GM12878 (cell line): ENCODE measurements at regions of chr6 and their contacts with region 1.

Region 1: GRCh38 chr6:79078075-79079025 is at the start of gene PHIP:
- DNase-seq: peak; percentile 82
- ATAC-seq: peak; percentile 86
- H3K4me3 ChIP-seq: peak within 1 kb of the TSS; percentile 93
- H3K27ac ChIP-seq: peak within 1 kb of the TSS; percentile 97
- H3K4me1 ChIP-seq: 0 out of 2 replicates have a peak, but pooled peaks cover 3% of the 10 kb centered on the region
- H3K27me3 ChIP-seq: no peaks in the 10 kb centered on the region
- CTCF ChIP-seq: no peak
- EP300 ChIP-seq: no peak
- POLR2A ChIP-seq: peak; percentile 91
- RAD21 ChIP-seq: no peak
- polyA plus RNA-seq, gene PHIP: 8.5 to 9.8 TPM

Region 2: GRCh38 chr6:79065232-79065631 is 13.1 kb before region 1 on chr6:
- CTCF ChIA-PET with region 1: interaction called, 4 read pairs
- POLR2A ChIA-PET with region 1: interaction called, 7 read pairs
- RAD21 ChIA-PET with region 1: interaction called, 5 read pairs
- SMC1A ChIA-PET with region 1: interaction called, 11 read pairs
- in situ Hi-C with region 1: no loop called
- intact Hi-C with region 1: no loop called
- DNase-seq: no peak
- ATAC-seq: no peak
- H3K4me3 ChIP-seq: no peak overlapping the region
- H3K27ac ChIP-seq: no peak overlapping the region
- H3K4me1 ChIP-seq: peaks cover 8% of the 10 kb centered on the region
- H3K27me3 ChIP-seq: no peaks in the 10 kb centered on the region
- CTCF ChIP-seq: no peak
- EP300 ChIP-seq: no peak
- POLR2A ChIP-seq: no peak
- RAD21 ChIP-seq: no peak

Region 3: DNA sequence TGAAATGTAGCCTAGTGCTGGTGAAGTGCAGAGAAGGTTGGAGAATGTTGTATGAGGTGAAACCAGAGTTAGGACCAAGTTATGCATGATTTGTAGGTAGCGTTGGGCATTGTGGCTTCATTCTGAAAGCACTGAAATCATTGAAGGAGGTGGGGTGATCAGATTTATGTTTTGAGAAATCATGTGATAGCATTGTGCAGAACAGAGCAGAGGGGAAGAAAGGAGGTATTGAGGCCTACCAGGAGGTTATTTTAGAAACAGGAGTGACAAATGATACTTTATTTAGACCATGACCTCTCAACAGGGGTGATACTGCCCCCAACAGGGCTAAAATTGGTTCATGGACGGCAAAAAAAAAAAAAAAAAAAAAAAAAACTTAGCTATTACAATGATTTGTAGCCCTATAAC is 171.8 kb after region 1 on chr6:
- CTCF ChIA-PET with region 1: interaction called, 7 read pairs
- POLR2A ChIA-PET with region 1: interaction called, 3 read pairs
- RAD21 ChIA-PET with region 1: interaction called, 10 read pairs
- SMC1A ChIA-PET with region 1: interaction called, 4 read pairs
- in situ Hi-C with region 1: no loop called
- intact Hi-C with region 1: no loop called
- DNase-seq: peak; percentile 51
- ATAC-seq: peak; percentile 84
- H3K4me3 ChIP-seq: no peak overlapping the region
- H3K27ac ChIP-seq: no peak overlapping the region
- H3K4me1 ChIP-seq: peaks cover 13% of the 10 kb centered on the region
- H3K27me3 ChIP-seq: no peaks in the 10 kb centered on the region
- CTCF ChIP-seq: peak; percentile 32 to 50 (median 49); a peak in 4 of 6 replicates
- EP300 ChIP-seq: 0 out of 4 replicates have a peak, but pooled peaks of 1 of the 2 experiments have one; percentile 19
- POLR2A ChIP-seq: no peak
- RAD21 ChIP-seq: peak; percentile 63

Region 4: GRCh38 chr6:79466207-79466834 is 388.0 kb after region 1 on chr6:
- CTCF ChIA-PET with region 1: no interaction called
- POLR2A ChIA-PET with region 1: no interaction called
- RAD21 ChIA-PET with region 1: no interaction called
- SMC1A ChIA-PET with region 1: no interaction called
- in situ Hi-C with region 1: no loop called
- intact Hi-C with region 1: loop called (anchors 10 kb)
- DNase-seq: no peak
- ATAC-seq: peak; percentile 53
- H3K4me3 ChIP-seq: no peak overlapping the region
- H3K27ac ChIP-seq: no peak overlapping the region
- H3K4me1 ChIP-seq: no peaks in the 10 kb centered on the region
- H3K27me3 ChIP-seq: no peaks in the 10 kb centered on the region
- CTCF ChIP-seq: peak; percentile 38 to 63 (median 45); a peak in 4 of 6 replicates
- EP300 ChIP-seq: no peak
- POLR2A ChIP-seq: no peak
- RAD21 ChIP-seq: peak; percentile 73